Activated CD8-positive, alpha-beta T cell treated with anti-CD3 and anti-CD28 coated beads for 36 hours (primary cell): ENCODE measurements at regions of chr5 and their contacts with region 1.

Region 1: DNA sequence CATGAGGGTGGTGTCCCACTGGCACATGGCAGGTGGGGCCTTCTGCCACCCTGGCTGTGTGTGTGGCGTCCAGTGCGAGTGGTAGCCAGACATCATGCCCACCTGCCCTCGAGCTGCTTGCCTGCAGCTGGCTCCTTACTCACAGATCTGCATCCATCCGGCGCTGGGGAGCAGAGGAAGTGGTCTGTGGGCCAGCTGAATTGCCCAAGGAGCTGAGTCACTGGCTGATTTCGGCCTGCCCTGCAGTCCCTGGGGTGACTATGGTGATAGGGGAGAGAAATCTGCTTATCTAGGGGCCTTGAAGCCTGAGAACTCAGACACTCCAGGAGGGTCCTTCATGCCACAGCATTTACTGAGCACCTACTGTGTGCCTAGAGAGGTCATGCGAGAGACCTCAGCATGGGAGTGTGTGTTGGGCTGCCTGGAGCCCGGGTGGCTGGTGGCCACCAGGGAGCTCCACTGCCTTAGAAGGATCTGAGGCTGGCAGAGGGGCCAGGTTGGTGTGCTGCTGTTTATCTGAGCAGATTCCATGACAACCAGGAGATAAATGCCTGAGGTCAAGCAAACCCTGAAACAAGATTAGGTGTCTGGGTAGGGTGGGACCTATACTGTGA is 57.1 kb downstream of the SLC22A5 start:
- DNase-seq: peak; percentile 92
- ATAC-seq: peak; percentile 56
- H3K4me3 Mint-ChIP-seq: peak overlapping the region; percentile 70
- H3K27ac Mint-ChIP-seq: peak overlapping the region; percentile 93
- H3K4me1 Mint-ChIP-seq: peaks cover 96% of the 10 kb centered on the region
- H3K27me3 Mint-ChIP-seq: no peaks in the 10 kb centered on the region
- CTCF ChIP-seq: peak; percentile 42

Region 2: DNA sequence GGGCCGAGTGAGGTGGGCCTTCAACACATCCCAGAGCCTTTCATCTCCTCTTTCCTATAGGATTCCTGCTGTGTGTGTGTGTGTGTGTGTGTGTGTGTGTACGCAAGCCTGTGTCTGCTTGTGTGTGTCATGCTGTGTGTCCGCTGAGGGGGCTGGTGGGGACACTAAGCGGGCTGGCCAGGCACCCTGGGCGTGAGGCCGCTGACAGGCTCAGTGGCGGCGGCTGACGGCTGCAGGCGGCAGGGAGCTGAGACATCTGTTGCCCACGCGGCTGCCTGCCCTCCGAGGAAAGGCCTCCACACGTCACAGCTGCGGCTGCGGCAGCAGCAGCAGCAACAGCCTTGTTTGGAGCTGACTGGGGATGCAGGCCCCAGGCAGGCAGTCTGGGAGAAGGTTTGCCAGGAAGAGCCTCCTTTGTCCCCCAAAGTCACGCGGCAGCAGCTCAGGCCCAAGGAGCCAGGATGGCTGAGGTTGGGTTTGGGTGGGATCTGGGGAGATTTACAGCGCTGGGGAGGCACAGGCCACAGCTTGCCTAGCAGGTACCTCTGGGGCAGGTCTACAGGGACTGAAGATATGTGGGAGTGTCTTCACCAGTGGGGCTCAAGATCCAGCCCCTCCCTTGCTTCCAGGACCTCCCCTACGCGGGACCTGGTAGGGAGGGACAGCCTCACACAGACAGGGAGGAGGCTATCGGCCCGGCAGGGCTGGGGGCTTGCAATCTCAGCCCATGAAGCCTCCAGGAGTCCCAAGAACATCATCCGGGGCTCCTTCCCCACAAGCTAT is 167.4 kb before region 1 on chr5:
- CTCF ChIA-PET with region 1: no interaction called
- POLR2A ChIA-PET with region 1: no interaction called
- intact Hi-C with region 1: no loop called
- DNase-seq: no peak
- ATAC-seq: no peak
- H3K4me3 Mint-ChIP-seq: no peak overlapping the region
- H3K27ac Mint-ChIP-seq: no peak overlapping the region
- H3K4me1 Mint-ChIP-seq: peaks cover 33% of the 10 kb centered on the region
- H3K27me3 Mint-ChIP-seq: peaks cover 13% of the 10 kb centered on the region
- CTCF ChIP-seq: no peak

Region 3: GRCh38 chr5:132410451-132411381 is 15.9 kb before region 1 on chr5:
- CTCF ChIA-PET with region 1: interaction called, 7 read pairs
- POLR2A ChIA-PET with region 1: interaction called, 44 read pairs
- intact Hi-C with region 1: no loop called
- DNase-seq: peak; percentile 89
- ATAC-seq: peak; percentile 71
- H3K4me3 Mint-ChIP-seq: peak overlapping the region; percentile 93
- H3K27ac Mint-ChIP-seq: peak overlapping the region; percentile 100
- H3K4me1 Mint-ChIP-seq: peaks cover 63% of the 10 kb centered on the region
- H3K27me3 Mint-ChIP-seq: no peaks in the 10 kb centered on the region
- CTCF ChIP-seq: peak; percentile 53

Region 4: GRCh38 chr5:132446669-132447068 is 20.0 kb after region 1 on chr5:
- CTCF ChIA-PET with region 1: interaction called, 11 read pairs
- POLR2A ChIA-PET with region 1: interaction called, 89 read pairs
- intact Hi-C with region 1: no loop called
- DNase-seq: no peak
- ATAC-seq: no peak
- H3K4me3 Mint-ChIP-seq: no peak overlapping the region
- H3K27ac Mint-ChIP-seq: no peak overlapping the region
- H3K4me1 Mint-ChIP-seq: peaks cover 63% of the 10 kb centered on the region
- H3K27me3 Mint-ChIP-seq: no peaks in the 10 kb centered on the region
- CTCF ChIP-seq: no peak

Region 5: GRCh38 chr5:132466433-132467286 is 40.0 kb after region 1 on chr5:
- CTCF ChIA-PET with region 1: interaction called, 45 read pairs
- POLR2A ChIA-PET with region 1: interaction called, 1,131 read pairs
- intact Hi-C with region 1: loop called (anchors 2 kb)
- DNase-seq: peak; percentile 89
- ATAC-seq: peak; percentile 69
- H3K4me3 Mint-ChIP-seq: peak overlapping the region; percentile 66
- H3K27ac Mint-ChIP-seq: peak overlapping the region; percentile 88
- H3K4me1 Mint-ChIP-seq: peaks cover 87% of the 10 kb centered on the region
- H3K27me3 Mint-ChIP-seq: no peaks in the 10 kb centered on the region
- CTCF ChIP-seq: no peak

Region 6: GRCh38 chr5:132495667-132496190 is 69.1 kb after region 1 on chr5:
- CTCF ChIA-PET with region 1: interaction called, 67 read pairs
- POLR2A ChIA-PET with region 1: interaction called, 1,131 read pairs
- intact Hi-C with region 1: loop called (anchors 5 kb)
- DNase-seq: peak; percentile 94
- ATAC-seq: peak; percentile 60
- H3K4me3 Mint-ChIP-seq: peak overlapping the region; percentile 90
- H3K27ac Mint-ChIP-seq: peak overlapping the region; percentile 99
- H3K4me1 Mint-ChIP-seq: peaks cover 67% of the 10 kb centered on the region
- H3K27me3 Mint-ChIP-seq: no peaks in the 10 kb centered on the region
- CTCF ChIP-seq: no peak

Region 7: DNA sequence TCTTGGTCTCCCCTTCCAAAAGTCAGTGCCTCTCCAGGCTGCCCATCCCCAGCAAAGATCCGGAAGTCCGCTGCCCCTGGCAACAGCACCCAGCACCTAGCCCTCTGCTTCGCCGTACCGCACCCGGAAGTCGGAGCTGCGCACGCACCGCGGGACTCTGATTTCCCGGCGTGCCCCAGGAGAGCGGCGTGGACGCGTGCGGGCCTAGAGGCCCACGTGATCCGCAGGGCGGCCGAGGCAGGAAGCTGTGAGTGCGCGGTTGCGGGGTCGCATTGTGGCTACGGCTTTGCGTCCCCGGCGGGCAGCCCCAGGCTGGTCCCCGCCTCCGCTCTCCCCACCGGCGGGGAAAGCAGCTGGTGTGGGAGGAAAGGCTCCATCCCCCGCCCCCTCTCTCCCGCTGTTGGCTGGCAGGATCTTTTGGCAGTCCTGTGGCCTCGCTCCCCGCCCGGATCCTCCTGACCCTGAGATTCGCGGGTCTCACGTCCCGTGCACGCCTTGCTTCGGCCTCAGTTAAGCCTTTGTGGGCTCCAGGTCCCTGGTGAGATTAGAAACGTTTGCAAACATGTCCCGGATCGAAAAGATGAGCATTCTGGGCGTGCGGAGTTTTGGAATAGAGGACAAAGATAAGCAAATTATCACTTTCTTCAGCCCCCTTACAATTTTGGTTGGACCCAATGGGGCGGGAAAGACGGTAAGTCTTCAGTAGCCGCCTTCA is 130.3 kb after region 1 on chr5 and contains the start of gene RAD50:
- CTCF ChIA-PET with region 1: no interaction called
- POLR2A ChIA-PET with region 1: no interaction called
- intact Hi-C with region 1: no loop called
- DNase-seq: peak; percentile 96
- ATAC-seq: peak; percentile 99
- H3K4me3 Mint-ChIP-seq: peak within 1 kb of the TSS; percentile 92
- H3K27ac Mint-ChIP-seq: peak within 1 kb of the TSS; percentile 96
- H3K4me1 Mint-ChIP-seq: peaks cover 26% of the 10 kb centered on the region
- H3K27me3 Mint-ChIP-seq: no peaks in the 10 kb centered on the region
- CTCF ChIP-seq: no peak
- total RNA-seq, gene RAD50: 46.4 to 48.9 TPM

Region 8: DNA sequence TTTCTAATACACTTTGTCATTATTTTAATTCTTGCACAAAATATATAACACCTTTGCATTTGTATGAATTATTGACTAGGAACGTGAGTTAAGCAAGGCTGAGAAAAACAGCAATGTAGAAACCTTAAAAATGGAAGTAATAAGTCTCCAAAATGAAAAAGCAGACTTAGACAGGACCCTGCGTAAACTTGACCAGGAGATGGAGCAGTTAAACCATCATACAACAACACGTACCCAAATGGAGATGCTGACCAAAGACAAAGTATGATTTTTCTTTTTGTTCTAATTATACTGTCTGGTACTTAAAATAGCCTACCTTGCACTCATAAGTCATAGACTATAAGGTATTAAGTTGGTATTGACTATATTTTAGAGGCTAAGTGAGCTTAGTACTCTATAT is 164.5 kb after region 1 on chr5:
- CTCF ChIA-PET with region 1: no interaction called
- POLR2A ChIA-PET with region 1: no interaction called
- intact Hi-C with region 1: no loop called
- DNase-seq: peak; percentile 8
- ATAC-seq: no peak
- H3K4me3 Mint-ChIP-seq: no peak overlapping the region
- H3K27ac Mint-ChIP-seq: no peak overlapping the region
- H3K4me1 Mint-ChIP-seq: no peaks in the 10 kb centered on the region
- H3K27me3 Mint-ChIP-seq: no peaks in the 10 kb centered on the region
- CTCF ChIP-seq: no peak